ENCODE measurements at regions of chr3 and their contacts with region 1.

Region 1: DNA sequence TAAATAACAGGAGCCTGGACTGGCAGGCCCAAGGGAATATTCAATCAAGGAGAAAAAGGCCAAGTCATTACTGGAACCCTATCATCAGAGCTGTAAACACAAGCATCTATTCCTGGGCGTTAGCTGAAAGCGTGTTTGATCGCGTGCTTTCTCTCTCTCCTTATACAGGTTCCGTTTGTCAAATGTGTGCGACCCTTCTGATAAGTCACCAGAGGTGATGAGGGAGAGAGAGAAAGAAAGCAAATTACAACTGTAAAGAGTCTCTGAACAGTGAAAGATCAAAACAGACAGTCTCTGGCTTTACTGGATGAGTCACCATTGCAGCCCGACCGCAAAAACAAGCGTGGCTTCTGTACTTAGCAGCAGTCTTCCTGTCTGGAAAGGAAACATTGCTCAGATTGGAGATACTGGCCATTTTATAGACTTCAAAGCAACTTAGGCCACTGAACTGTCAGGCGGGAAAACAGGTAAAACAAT is 39.5 kb upstream of the TPRG1 start:
- DNase-seq: peak; percentile 93
- H3K4me3 Mint-ChIP-seq: peak overlapping the region; percentile 70
- H3K27ac Mint-ChIP-seq: peak overlapping the region; percentile 91
- H3K4me1 Mint-ChIP-seq: peaks cover 25% of the 10 kb centered on the region
- H3K27me3 Mint-ChIP-seq: no peaks in the 10 kb centered on the region

Region 2: DNA sequence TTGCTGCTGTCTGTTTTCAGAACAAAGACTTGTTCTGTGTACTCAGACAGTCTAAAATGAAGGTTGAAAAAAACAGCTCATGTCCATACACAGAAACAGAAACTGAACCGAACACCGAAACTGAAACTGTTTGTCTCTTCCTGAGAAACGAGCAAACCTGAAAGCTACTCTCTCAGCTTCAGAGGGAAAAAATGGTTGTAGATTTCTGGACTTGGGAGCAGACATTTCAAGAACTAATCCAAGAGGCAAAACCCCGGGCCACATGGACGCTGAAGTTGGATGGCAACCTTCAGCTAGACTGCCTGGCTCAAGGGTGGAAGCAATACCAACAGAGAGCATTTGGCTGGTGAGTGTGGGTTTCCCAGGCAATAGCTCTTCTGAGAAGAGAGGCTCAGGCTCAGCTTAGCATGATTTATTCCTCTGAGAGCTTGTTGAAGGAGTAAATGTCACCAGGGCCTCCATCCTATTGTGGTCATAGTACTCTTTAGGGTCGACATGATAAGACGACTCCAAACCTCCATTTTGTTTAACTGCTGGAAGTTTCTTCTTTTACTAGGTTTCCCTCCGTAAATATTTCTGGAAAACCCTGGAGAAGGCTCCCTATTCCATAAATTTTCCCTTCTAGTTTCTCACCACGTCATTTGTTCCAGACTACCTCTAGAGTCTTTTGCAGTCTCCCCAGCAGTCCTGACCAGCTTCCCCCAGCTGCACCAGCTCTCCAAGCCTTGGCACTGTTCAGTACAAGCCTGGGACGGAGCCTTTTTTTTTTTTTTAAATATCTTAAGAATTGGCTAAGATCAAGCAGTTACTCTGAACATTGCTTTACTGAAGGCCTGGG is 1763.8 kb before region 1 on chr3 and contains the start of gene RTP4:
- intact Hi-C with region 1: loop called (anchors 5 kb)
- DNase-seq: peak; percentile 89
- H3K4me3 Mint-ChIP-seq: peak within 1 kb of the TSS; percentile 90
- H3K27ac Mint-ChIP-seq: peak within 1 kb of the TSS; percentile 94
- H3K4me1 Mint-ChIP-seq: peaks cover 31% of the 10 kb centered on the region
- H3K27me3 Mint-ChIP-seq: no peaks in the 10 kb centered on the region
- total RNA-seq, gene RTP4: 3.0 and 3.4 TPM in 2 replicates

Region 3: GRCh38 chr3:189236352-189236751 is 104.1 kb after region 1 on chr3:
- intact Hi-C with region 1: loop called (anchors 5 kb)
- DNase-seq: no peak
- H3K4me3 Mint-ChIP-seq: no peak overlapping the region
- H3K27ac Mint-ChIP-seq: peak overlapping the region; percentile 5
- H3K4me1 Mint-ChIP-seq: peaks cover 10% of the 10 kb centered on the region
- H3K27me3 Mint-ChIP-seq: no peaks in the 10 kb centered on the region

Measured in activated CD4-positive, alpha-beta T cell treated with anti-CD3 and anti-CD28 coated beads, Interleukin-2, amount 10 ng/mL, durations not matched to agents 24 days and 14 days (primary cell).